Common myeloid progenitor, CD34-positive (primary cell): ENCODE measurements at regions of chr21 and their contacts with region 1.

Region 1: GRCh38 chr21:33608559-33608958 is 20.1 kb upstream of the DONSON start:
- DNase-seq: no peak
- H3K4me3 ChIP-seq: no peak overlapping the region
- H3K27ac ChIP-seq: no peak overlapping the region
- H3K4me1 ChIP-seq: no peaks in the 10 kb centered on the region
- H3K27me3 ChIP-seq: no peaks in the 10 kb centered on the region

Region 2: DNA sequence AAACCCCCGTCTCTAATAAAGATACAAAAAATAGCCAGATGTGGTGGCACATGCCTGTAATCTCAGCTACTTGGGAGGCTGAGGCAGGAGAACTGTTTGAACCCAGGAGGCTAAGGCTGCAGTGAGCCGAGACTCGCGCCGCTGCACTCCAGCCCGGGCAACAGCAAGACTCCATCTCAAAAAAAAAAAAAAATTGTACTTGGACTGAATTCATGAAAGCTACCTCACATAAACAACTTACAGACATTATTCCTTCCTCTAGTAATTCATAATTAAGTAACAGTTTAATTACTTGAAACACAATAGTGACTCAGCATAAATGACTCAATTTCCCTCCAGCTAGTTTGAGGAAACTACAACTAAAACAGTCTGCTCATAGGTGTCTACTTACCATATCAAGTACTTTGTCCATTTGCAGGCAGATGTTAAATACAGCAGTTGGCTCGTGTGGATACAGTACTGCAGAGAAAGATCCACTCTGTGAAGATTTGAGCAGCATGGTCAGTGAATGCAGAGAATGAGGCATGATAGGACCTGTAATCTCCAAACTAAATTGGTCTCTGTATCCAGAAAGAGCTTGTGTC is 29.5 kb before region 1 on chr21:
- CTCF ChIA-PET with region 1: interaction called, 15 read pairs
- POLR2A ChIA-PET with region 1: no interaction called
- DNase-seq: peak; percentile 18 to 57 (median 48)
- H3K4me3 ChIP-seq: no peak overlapping the region
- H3K27ac ChIP-seq: peak overlapping the region in 1 of 2 experiments; percentile 68
- H3K4me1 ChIP-seq: peaks cover 0 to 5% (median 3%) of the 10 kb centered on the region in 4 experiments
- H3K27me3 ChIP-seq: no peaks in the 10 kb centered on the region

Region 3: DNA sequence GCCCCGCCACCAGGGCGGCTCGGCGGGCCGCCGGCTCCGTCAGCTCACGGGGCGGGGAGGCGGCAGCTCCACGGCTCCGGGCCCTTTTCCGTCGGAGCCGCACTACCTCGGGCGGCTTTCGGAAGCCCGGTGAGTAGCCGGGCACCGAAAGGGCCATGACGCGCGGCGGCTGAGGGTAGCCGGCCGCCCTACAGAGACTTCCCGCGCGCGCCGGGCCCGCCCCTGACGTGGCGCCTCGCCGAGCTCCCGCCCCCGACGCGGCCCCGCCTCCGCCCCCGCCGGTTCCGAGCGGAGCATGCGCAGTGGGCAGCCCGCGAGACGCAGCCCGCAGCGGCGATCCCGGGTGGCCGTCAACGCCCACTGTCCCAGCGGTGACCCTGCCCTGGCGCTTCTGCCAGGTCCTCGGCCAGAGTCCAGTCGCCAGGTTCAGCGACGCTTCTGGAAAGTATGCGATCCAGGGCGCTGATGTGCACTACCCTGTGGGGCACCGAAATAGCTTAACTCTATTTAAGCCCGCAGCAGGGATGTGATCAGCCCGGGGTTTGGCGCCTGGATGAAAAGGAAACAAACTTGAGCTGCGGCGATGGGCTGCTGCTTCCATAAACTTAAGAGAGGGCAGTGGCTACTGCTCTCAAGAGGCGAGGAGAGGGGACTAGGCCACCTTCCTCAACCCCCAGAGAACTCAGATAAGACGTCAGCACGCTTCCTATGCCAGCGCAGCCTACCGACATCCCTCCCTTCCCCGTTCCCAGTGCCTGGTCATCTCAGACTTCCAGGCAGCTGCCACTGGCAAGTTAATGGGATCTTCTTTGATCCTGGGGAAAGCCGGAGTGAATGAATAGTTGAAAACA is 19.8 kb before region 1 on chr21 and contains the start of gene DONSON:
- CTCF ChIA-PET with region 1: interaction called, 16 read pairs
- POLR2A ChIA-PET with region 1: interaction called, 3 read pairs
- DNase-seq: peak; percentile 61 to 80 (median 76)
- H3K4me3 ChIP-seq: peak within 1 kb of the TSS; percentile 87 to 96 (median 94)
- H3K27ac ChIP-seq: peak within 1 kb of the TSS in 1 of 2 experiments; percentile 79
- H3K4me1 ChIP-seq: peaks cover 4 to 16% (median 11%) of the 10 kb centered on the region in 4 experiments
- H3K27me3 ChIP-seq: no peaks in the 10 kb centered on the region

Region 4: GRCh38 chr21:33619726-33620125 is 11.2 kb after region 1 on chr21:
- CTCF ChIA-PET with region 1: interaction called, 13 read pairs
- POLR2A ChIA-PET with region 1: no interaction called
- DNase-seq: no peak
- H3K4me3 ChIP-seq: no peak overlapping the region
- H3K27ac ChIP-seq: no peak overlapping the region
- H3K4me1 ChIP-seq: no peaks in the 10 kb centered on the region
- H3K27me3 ChIP-seq: no peaks in the 10 kb centered on the region

Region 5: DNA sequence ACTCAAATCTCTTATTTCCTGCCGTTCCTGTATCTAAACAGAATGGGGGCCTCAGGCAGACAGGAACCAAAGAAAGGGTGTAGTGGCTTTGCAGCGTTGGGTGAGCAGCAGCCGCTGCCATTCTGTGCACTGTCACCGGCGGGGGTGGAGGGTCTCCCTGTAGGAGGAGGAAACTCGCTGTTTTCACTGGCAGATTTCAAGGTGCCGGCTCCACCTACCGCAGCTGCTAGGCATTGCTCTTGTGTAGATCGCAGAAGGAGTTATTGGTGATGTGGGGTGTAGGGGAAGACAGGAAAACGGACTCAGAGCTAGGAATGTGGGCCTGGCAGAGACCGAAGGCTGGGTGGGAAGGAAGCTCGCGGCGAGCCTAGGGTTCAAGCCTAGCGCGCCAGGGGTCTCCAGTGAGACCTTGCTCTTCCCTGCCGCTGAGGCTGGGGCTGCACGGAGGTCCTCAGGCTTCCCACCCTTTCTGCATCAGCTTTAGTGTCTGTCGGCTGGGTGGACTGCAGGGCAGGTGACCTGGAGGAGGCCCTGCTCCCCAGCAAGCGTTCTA is 286.3 kb after region 1 on chr21:
- CTCF ChIA-PET with region 1: interaction called, 14 read pairs
- POLR2A ChIA-PET with region 1: no interaction called
- DNase-seq: peak; percentile 86 to 93 (median 91)
- H3K4me3 ChIP-seq: peak overlapping the region; percentile 1 to 79 (median 50)
- H3K27ac ChIP-seq: peak overlapping the region in 1 of 2 experiments; percentile 25
- H3K4me1 ChIP-seq: peaks cover 0 to 17% (median 13%) of the 10 kb centered on the region in 4 experiments
- H3K27me3 ChIP-seq: no peaks in the 10 kb centered on the region